ENCODE measurements at regions of chr18 and their contacts with region 1.

Region 1: DNA sequence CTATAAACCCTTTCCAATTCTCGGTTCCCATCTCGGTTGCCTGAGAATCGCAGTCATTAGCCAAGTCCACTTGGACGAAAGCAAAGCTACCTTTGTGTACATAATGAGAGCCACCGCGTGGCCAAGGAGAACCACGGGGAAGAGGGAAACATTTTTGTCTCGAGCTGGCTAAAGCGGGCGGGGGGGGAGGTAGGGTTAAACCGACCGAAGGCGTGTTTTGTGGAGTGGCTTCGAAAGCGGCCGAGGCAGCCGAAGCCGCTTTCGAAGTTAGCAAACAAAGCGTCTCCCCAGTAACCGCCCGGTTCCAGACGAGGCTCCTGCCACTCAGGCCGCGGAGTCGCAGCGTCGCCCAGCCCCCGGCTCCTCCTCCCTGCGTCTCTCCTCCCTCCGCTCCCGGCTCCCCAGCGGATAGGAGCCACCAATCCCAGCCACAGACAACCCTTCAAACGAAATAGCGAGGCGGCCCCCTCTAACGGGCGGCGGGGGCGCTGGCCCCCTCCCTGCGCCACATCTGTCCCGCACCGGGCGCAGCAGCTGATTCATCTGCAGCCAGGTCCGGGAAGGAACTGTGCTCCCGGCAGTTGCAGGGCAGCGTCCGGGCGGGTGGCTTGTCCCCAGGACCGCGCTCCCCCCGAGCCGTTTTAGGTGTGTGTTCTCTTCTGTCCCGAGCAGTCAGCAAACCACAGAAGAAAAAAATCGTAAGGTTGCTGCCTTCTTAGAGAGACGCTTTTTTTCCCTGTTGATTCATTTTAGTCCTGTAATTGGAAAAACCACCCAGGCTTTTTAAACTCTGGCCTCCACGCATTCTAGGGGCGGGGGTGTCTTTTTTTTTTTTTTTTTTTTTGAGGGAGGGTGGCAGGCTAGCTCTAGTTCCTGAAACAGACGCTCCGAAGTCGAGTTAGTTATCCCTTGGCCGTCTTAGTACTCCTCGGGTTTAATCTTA is 1.8 kb upstream of the TGIF1 start:
- DNase-seq: peak; percentile 86 to 98 (median 96)
- H3K4me3 ChIP-seq: peak overlapping the region; percentile 70 to 86 (median 77)
- H3K4me3 Mint-ChIP-seq: peak overlapping the region; percentile 90 to 94
- H3K27ac ChIP-seq: peak overlapping the region; percentile 99
- H3K27ac Mint-ChIP-seq: peak overlapping the region; percentile 100
- H3K4me1 ChIP-seq: peaks cover 47 to 55% of the 10 kb centered on the region in 2 donors
- H3K4me1 Mint-ChIP-seq: peaks cover 33% of the 10 kb centered on the region
- H3K27me3 ChIP-seq: no peaks in the 10 kb centered on the region
- H3K27me3 Mint-ChIP-seq: peaks cover 0 to 4% (median 3%) of the 10 kb centered on the region in 3 donors
- CTCF ChIP-seq: no peak

Region 2: GRCh38 chr18:2655178-2655953 is 792.8 kb before region 1 on chr18 and contains the start of gene SMCHD1:
- intact Hi-C with region 1: loop called (anchors 10 kb)
- DNase-seq: peak; percentile 74 to 85 (median 76)
- H3K4me3 ChIP-seq: peak within 1 kb of the TSS; percentile 78 to 100 (median 86)
- H3K4me3 Mint-ChIP-seq: peak within 1 kb of the TSS; percentile 95
- H3K27ac ChIP-seq: peak within 1 kb of the TSS; percentile 98
- H3K27ac Mint-ChIP-seq: peak within 1 kb of the TSS; percentile 96 to 98 (median 97)
- H3K4me1 ChIP-seq: peaks cover 60 to 73% of the 10 kb centered on the region in 2 donors
- H3K4me1 Mint-ChIP-seq: peaks cover 57% of the 10 kb centered on the region
- H3K27me3 ChIP-seq: no peaks in the 10 kb centered on the region
- H3K27me3 Mint-ChIP-seq: peaks cover 0 to 5% (median 0%) of the 10 kb centered on the region in 3 donors
- CTCF ChIP-seq: no peak
- polyA plus RNA-seq, gene SMCHD1: 12.7 to 45.5 (median 16.8) TPM

Region 3: DNA sequence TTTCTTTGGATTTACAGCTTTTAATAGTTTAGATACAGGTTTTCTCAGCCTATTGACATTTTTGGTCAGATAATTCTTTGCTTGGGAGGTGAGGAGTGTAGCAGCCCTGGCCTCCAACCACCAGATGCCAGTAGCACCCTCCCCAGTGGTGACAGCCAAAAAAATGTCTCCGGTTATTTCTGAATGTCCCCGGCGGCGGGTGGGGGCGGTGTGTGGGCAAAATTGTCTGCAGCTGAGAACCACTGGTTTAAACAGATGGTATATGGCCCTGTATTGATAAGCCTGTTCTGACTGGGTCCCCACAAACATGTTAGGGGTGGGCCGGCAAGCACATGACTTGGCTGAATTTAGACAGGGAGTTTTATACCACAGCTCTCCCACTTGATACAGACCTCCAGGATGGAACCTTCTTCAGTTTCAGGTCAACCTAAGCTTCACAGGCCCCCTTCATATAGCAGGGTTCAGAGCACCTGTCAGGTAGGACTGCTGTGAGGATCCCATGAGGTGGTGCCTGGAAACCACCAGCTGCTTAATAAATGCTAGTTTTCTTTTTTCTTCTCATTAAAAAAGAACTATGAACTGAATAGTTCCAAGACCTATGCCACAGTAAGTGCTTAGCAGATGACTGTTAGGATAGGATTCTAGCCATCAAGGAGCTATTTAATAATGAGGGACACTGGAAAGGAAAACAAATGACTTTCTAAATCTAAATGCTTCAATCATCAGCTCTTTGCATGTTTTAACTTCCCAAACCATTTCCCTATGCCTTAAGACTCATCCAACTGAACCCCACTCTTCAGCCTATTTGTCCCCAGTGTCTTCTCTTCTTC is 453.3 kb before region 1 on chr18:
- intact Hi-C with region 1: loop called in 1 of 2 experiments (anchors 10 kb)
- DNase-seq: peak; percentile 50 to 61 (median 57)
- H3K4me3 ChIP-seq: no peak overlapping the region
- H3K4me3 Mint-ChIP-seq: peak overlapping the region in 1 of 2 donors; percentile 71
- H3K27ac ChIP-seq: no peak overlapping the region
- H3K27ac Mint-ChIP-seq: peak overlapping the region in 4 of 7 donors; percentile 0 to 61 (median 47)
- H3K4me1 ChIP-seq: peaks cover 18 to 28% of the 10 kb centered on the region in 2 donors
- H3K4me1 Mint-ChIP-seq: peaks cover 45% of the 10 kb centered on the region
- H3K27me3 ChIP-seq: no peaks in the 10 kb centered on the region
- H3K27me3 Mint-ChIP-seq: no peaks in the 10 kb centered on the region
- CTCF ChIP-seq: peak; percentile 77

Region 4: GRCh38 chr18:3261371-3262246 is 186.6 kb before region 1 on chr18 and contains the start of gene MYL12B:
- intact Hi-C with region 1: loop called in 1 of 2 experiments (anchors 5 kb)
- DNase-seq: peak; percentile 79 to 84 (median 83)
- H3K4me3 ChIP-seq: peak within 1 kb of the TSS; percentile 64 to 84 (median 80)
- H3K4me3 Mint-ChIP-seq: peak within 1 kb of the TSS; percentile 82 to 96
- H3K27ac ChIP-seq: peak within 1 kb of the TSS; percentile 83 to 90
- H3K27ac Mint-ChIP-seq: peak within 1 kb of the TSS; percentile 96 to 99 (median 98)
- H3K4me1 ChIP-seq: peaks cover 47 to 58% of the 10 kb centered on the region in 2 donors
- H3K4me1 Mint-ChIP-seq: peaks cover 62% of the 10 kb centered on the region
- H3K27me3 ChIP-seq: no peaks in the 10 kb centered on the region
- H3K27me3 Mint-ChIP-seq: no peaks in the 10 kb centered on the region
- CTCF ChIP-seq: no peak
- polyA plus RNA-seq, gene MYL12B: 295 to 814 (median 727) TPM

Region 5: DNA sequence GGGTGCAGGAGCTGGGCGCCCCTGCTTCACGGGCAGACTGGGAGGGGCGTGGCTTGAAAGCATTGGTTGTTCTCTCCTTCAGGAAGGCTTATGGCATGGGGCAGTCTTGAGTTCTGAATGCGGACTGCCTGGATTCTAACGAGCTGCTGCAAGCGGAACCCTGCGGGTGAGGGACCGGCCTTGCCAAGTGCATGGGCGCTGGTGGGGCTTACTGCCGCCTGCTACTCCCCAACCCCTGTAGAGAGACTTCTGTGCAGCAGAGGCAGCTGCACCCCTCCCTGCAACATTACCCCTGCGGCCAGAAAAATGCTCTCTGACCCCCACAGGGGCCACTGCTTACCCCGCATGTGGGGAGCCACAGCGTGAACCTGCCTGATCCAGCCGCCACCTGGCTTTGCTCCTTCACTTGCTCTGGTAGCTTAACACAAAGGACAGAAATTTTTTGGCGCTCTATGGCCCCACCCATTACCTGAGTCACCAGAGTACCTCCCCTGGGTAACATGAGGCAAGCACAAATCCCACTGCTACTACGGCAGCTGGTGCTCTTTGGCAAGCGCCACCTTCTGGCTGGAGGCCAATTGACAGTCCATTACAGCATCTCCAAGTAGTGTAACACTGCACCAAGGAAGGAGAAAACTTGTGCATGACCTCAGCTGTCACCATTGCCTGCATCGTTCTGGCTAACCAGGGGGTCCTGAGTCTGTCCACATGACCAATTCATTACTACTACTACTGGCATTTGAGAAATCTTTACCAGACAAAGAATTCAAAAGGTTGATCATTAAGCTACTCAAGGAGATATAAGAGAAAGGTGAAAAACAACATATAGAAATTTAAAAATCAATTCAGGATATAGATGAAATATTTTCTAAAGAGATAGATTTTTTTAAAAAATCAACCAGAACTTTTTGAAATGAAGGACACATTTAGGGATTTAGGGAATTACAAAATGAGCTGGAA is 150.9 kb before region 1 on chr18:
- intact Hi-C with region 1: loop called in 1 of 2 experiments (anchors 5 kb)
- DNase-seq: peak; percentile 74 to 83 (median 83)
- H3K4me3 ChIP-seq: peak overlapping the region; percentile 73 to 87 (median 83)
- H3K4me3 Mint-ChIP-seq: peak overlapping the region; percentile 89 to 99
- H3K27ac ChIP-seq: peak overlapping the region in 1 of 2 donors; percentile 73
- H3K27ac Mint-ChIP-seq: peak overlapping the region in 6 of 7 donors; percentile 17 to 84 (median 76)
- H3K4me1 ChIP-seq: peaks cover 6 to 8% of the 10 kb centered on the region in 2 donors
- H3K4me1 Mint-ChIP-seq: peaks cover 8% of the 10 kb centered on the region
- H3K27me3 ChIP-seq: no peaks in the 10 kb centered on the region
- H3K27me3 Mint-ChIP-seq: peaks cover 2 to 20% (median 6%) of the 10 kb centered on the region in 3 donors
- CTCF ChIP-seq: peak; percentile 94

Region 6: DNA sequence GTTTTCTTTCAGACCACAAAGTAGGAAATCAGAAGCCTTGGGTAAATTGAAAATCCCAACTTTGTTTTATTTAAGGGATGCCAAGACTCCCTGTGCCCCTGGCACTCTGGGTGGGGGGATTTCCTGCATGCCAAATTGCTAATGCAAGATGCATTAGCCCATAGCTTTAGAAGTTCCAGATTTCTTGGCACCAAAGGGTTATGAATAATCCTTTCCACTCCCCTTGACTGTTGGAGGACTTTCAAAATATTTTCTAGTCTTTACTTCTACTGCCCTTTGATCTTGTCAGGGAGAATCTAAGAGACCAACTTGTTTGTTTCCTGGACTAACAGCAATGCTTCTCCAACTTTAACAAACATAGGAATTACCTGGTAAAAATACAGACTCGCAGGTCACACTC is 80.0 kb before region 1 on chr18:
- intact Hi-C with region 1: no loop called
- DNase-seq: no peak
- H3K4me3 ChIP-seq: no peak overlapping the region
- H3K4me3 Mint-ChIP-seq: no peak overlapping the region
- H3K27ac ChIP-seq: no peak overlapping the region
- H3K27ac Mint-ChIP-seq: no peak overlapping the region
- H3K4me1 ChIP-seq: no peaks in the 10 kb centered on the region
- H3K4me1 Mint-ChIP-seq: no peaks in the 10 kb centered on the region
- H3K27me3 ChIP-seq: no peaks in the 10 kb centered on the region
- H3K27me3 Mint-ChIP-seq: peaks cover 1 to 8% (median 5%) of the 10 kb centered on the region in 3 donors
- CTCF ChIP-seq: no peak

Region 7: DNA sequence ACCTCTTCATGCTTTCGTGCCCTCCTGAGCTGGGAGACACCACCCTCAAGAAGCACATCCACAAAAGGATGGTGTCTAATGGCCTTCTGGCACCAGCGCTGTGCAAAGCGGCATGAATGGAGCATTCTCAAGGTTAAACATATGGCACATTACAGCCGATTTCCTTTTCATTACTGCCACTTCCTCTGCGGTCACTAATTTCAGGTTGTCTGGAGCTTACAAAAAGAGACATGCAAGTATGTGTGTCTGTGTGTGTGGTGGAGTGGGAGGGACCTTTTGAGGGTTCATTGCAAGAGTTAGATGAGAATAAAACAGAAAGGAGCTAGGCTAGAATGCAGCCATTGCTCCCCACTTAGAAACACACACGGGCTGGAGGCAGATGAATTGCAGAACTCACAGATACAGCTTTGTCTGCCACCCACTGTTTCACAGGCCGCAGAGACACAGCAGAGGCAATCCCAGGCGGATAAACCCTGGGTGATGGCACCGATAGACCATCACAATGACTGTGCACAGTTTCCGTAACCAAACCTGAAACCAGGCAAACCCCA is 77.8 kb after region 1 on chr18:
- intact Hi-C with region 1: no loop called
- DNase-seq: peak in 2 of 3 donors; percentile 3 to 6
- H3K4me3 ChIP-seq: peak overlapping the region in 1 of 3 experiments; percentile 7
- H3K4me3 Mint-ChIP-seq: peak overlapping the region; percentile 12 to 54
- H3K27ac ChIP-seq: no peak overlapping the region
- H3K27ac Mint-ChIP-seq: peak overlapping the region in 2 of 7 donors; percentile 5 to 39
- H3K4me1 ChIP-seq: peaks cover 8 to 11% of the 10 kb centered on the region in 2 donors
- H3K4me1 Mint-ChIP-seq: peaks cover 16% of the 10 kb centered on the region
- H3K27me3 ChIP-seq: no peaks in the 10 kb centered on the region
- H3K27me3 Mint-ChIP-seq: peaks cover 3 to 4% (median 3%) of the 10 kb centered on the region in 3 donors
- CTCF ChIP-seq: no peak

Region 8: DNA sequence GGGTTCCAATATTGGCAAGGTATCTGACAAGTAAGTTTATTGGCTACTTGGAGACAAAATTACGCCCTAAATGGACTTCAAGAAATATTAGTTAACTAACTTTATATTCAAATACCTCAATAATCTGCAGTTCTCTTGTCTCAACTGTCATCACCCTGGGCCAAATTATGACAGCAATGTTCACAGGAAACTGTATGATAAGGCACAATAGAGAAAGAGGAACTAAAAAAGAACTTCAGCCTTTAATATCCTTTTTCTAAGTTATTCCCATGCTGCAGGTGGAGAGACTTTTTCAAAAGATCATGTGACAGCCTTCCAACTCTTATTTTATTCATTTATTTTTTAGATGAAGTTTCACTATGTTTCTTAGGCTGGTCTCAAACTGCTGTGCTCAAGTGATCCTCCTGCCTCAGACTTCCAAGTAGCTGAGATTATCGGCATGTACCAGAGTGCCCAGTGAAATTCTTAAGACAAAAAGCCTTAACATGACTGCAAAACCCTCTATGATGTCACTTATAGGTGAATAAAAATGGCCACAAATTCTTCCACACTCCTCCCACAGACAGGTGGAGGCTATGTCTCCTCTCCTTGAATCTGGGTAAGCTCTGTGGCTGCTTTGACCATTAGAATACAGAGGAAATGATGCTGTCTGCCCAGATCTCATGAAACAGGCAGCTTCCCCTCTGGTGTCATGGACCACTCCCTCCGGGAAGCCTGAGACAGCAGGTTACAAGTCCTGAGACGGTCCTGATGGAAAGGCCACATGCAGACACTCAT is 212.8 kb after region 1 on chr18:
- intact Hi-C with region 1: loop called (anchors 2 to 5 kb)
- DNase-seq: peak; percentile 77 to 80 (median 79)
- H3K4me3 ChIP-seq: peak overlapping the region in 2 of 3 experiments; percentile 11 to 29
- H3K4me3 Mint-ChIP-seq: peak overlapping the region; percentile 51 to 81
- H3K27ac ChIP-seq: peak overlapping the region; percentile 79 to 88
- H3K27ac Mint-ChIP-seq: peak overlapping the region; percentile 89 to 97 (median 94)
- H3K4me1 ChIP-seq: peaks cover 46 to 49% of the 10 kb centered on the region in 2 donors
- H3K4me1 Mint-ChIP-seq: peaks cover 49% of the 10 kb centered on the region
- H3K27me3 ChIP-seq: no peaks in the 10 kb centered on the region
- H3K27me3 Mint-ChIP-seq: no peaks in the 10 kb centered on the region
- CTCF ChIP-seq: no peak